Mammary epithelial cell (primary cell): ENCODE measurements at regions of chr15 and their contacts with region 1.

Region 1: GRCh38 chr15:45402162-45402954 is 24.0 kb upstream of the GATM start:
- DNase-seq: peak; percentile 99
- H3K4me3 ChIP-seq: peak overlapping the region; percentile 79 to 99 (median 96)
- H3K27ac ChIP-seq: peak overlapping the region; percentile 63
- H3K4me1 ChIP-seq: peaks cover 20% of the 10 kb centered on the region
- H3K27me3 ChIP-seq: no peaks in the 10 kb centered on the region
- CTCF ChIP-seq: no peak

Region 2: GRCh38 chr15:45126535-45127158 is 275.7 kb before region 1 on chr15:
- CTCF ChIA-PET with region 1: interaction called, 3 read pairs
- dilution Hi-C with region 1: no loop called
- in situ Hi-C with region 1: no loop called
- intact Hi-C with region 1: loop called (anchors 1 kb)
- DNase-seq: peak; percentile 35
- H3K4me3 ChIP-seq: no peak overlapping the region
- H3K27ac ChIP-seq: no peak overlapping the region
- H3K4me1 ChIP-seq: peaks cover 21% of the 10 kb centered on the region
- H3K27me3 ChIP-seq: no peaks in the 10 kb centered on the region
- CTCF ChIP-seq: peak; percentile 85 to 90

Region 3: DNA sequence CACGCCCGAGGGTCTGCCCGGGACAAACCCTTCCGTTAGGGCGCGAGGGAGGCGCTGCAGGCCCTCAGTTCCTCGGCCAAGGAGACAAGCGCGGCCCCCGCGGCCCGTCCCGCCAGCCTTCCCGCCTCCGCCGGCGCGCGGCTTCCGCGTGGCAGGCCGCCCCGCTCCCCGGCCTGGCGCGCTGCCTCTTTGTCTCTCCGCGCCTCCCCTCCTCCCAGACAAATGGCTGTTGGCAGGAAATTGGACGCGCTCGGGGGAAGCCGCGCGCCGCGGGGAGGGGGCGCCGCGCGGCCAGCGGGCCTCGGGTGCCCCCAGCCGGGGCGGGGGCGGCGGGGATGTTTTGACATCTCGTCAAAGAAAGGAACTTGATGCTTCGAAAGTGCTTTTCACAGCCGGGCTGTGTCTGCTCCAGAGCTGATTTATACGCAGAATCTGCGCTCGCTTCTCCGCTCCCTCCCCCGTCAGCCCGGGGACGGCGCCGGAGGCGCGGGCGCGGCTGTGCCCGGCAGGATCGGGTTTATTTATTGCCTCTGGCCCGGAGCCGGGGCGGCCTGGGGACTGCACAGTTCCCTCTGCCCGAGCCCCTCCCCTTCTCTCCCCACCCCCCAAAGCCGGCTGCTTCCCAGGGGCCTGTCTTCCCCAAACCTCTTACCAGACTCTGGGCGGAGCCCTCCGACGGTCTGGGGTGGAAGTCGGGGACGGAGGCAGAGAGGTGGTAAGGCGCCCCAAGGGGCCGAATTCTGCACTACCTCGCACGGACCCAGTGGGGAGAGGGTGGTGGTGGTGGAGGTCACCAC is 235.3 kb before region 1 on chr15:
- CTCF ChIA-PET with region 1: interaction called, 5 read pairs
- dilution Hi-C with region 1: no loop called
- in situ Hi-C with region 1: no loop called
- intact Hi-C with region 1: loop called (anchors 1 kb)
- DNase-seq: peak; percentile 44
- H3K4me3 ChIP-seq: peak overlapping the region; percentile 50 to 58 (median 54)
- H3K27ac ChIP-seq: peak overlapping the region; percentile 35
- H3K4me1 ChIP-seq: peaks cover 22% of the 10 kb centered on the region
- H3K27me3 ChIP-seq: no peaks in the 10 kb centered on the region
- CTCF ChIP-seq: peak; percentile 42 to 65

Region 4: GRCh38 chr15:45205192-45205591 is 197.2 kb before region 1 on chr15:
- CTCF ChIA-PET with region 1: interaction called, 5 read pairs
- dilution Hi-C with region 1: no loop called
- in situ Hi-C with region 1: loop called in 1 of 2 experiments (anchors 5 kb)
- intact Hi-C with region 1: loop called (anchors 1 kb)
- DNase-seq: peak; percentile 57
- H3K4me3 ChIP-seq: no peak overlapping the region
- H3K27ac ChIP-seq: no peak overlapping the region
- H3K4me1 ChIP-seq: no peaks in the 10 kb centered on the region
- H3K27me3 ChIP-seq: no peaks in the 10 kb centered on the region
- CTCF ChIP-seq: peak; percentile 97 to 99

Region 5: GRCh38 chr15:45307230-45307924 is 95.0 kb before region 1 on chr15:
- CTCF ChIA-PET with region 1: no interaction called
- dilution Hi-C with region 1: no loop called
- in situ Hi-C with region 1: no loop called
- intact Hi-C with region 1: loop called (anchors 1 kb)
- DNase-seq: peak; percentile 40
- H3K4me3 ChIP-seq: peak overlapping the region in 1 of 3 experiments; percentile 19
- H3K27ac ChIP-seq: no peak overlapping the region
- H3K4me1 ChIP-seq: no peaks in the 10 kb centered on the region
- H3K27me3 ChIP-seq: no peaks in the 10 kb centered on the region
- CTCF ChIP-seq: peak; percentile 30 to 53

Region 6: GRCh38 chr15:45587095-45587860 is 184.9 kb after region 1 on chr15 and contains the start of gene BLOC1S6:
- CTCF ChIA-PET with region 1: no interaction called
- dilution Hi-C with region 1: no loop called
- in situ Hi-C with region 1: no loop called
- intact Hi-C with region 1: loop called (anchors 1 kb)
- DNase-seq: peak; percentile 91
- H3K4me3 ChIP-seq: peak within 1 kb of the TSS; percentile 68 to 88 (median 79)
- H3K27ac ChIP-seq: peak within 1 kb of the TSS; percentile 93
- H3K4me1 ChIP-seq: peaks cover 19% of the 10 kb centered on the region
- H3K27me3 ChIP-seq: no peaks in the 10 kb centered on the region
- CTCF ChIP-seq: no peak
- total RNA-seq, gene BLOC1S6: 38.0 to 49.2 TPM